ENCODE measurements at regions of chr1 and their contacts with region 1.

Region 1: GRCh38 chr1:66929999-66930822 is 5.4 kb downstream of the MIER1 start:
- DNase-seq: peak; percentile 94
- H3K4me3 Mint-ChIP-seq: peak overlapping the region; percentile 84
- H3K27ac Mint-ChIP-seq: peak overlapping the region; percentile 99
- H3K4me1 Mint-ChIP-seq: peaks cover 29% of the 10 kb centered on the region
- H3K27me3 Mint-ChIP-seq: no peaks in the 10 kb centered on the region
- CTCF ChIP-seq: no peak

Region 2: GRCh38 chr1:66563094-66563800 is 367.0 kb before region 1 on chr1:
- CTCF ChIA-PET with region 1: no interaction called
- POLR2A ChIA-PET with region 1: no interaction called
- intact Hi-C with region 1: loop called (anchors 5 kb)
- DNase-seq: peak; percentile 70
- H3K4me3 Mint-ChIP-seq: no peak overlapping the region
- H3K27ac Mint-ChIP-seq: peak overlapping the region; percentile 95
- H3K4me1 Mint-ChIP-seq: peaks cover 34% of the 10 kb centered on the region
- H3K27me3 Mint-ChIP-seq: no peaks in the 10 kb centered on the region
- CTCF ChIP-seq: no peak

Region 3: DNA sequence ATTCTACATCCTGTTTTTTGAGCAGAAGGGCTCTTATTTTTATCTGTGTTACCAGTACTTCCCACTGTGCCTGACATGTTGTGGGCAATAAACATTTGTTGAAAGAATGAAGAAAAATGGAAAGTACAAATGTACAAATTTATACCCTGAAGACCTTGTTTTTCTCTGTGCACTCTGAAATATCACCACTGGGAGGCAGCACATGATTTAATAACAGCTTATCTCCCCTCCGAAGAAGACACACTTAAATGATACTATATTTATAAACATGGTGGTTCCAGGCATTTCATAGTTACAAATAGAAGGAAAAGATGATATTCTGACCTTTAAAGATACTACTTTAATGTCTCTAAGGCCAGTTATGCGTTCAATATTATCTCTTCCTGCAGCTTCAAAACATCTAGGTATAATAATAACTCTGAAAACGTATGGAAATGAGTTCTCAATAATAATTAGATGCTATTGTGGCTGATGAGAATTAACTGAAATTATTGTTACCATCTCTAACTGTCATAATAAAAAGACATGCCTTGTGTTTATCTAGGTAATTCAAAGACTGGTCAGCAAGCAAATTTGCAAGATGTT is 165.1 kb before region 1 on chr1:
- CTCF ChIA-PET with region 1: interaction called, 4 read pairs
- POLR2A ChIA-PET with region 1: interaction called, 7 read pairs
- intact Hi-C with region 1: loop called (anchors 1 kb)
- DNase-seq: peak; percentile 65
- H3K4me3 Mint-ChIP-seq: no peak overlapping the region
- H3K27ac Mint-ChIP-seq: no peak overlapping the region
- H3K4me1 Mint-ChIP-seq: no peaks in the 10 kb centered on the region
- H3K27me3 Mint-ChIP-seq: no peaks in the 10 kb centered on the region
- CTCF ChIP-seq: peak; percentile 78

Region 4: DNA sequence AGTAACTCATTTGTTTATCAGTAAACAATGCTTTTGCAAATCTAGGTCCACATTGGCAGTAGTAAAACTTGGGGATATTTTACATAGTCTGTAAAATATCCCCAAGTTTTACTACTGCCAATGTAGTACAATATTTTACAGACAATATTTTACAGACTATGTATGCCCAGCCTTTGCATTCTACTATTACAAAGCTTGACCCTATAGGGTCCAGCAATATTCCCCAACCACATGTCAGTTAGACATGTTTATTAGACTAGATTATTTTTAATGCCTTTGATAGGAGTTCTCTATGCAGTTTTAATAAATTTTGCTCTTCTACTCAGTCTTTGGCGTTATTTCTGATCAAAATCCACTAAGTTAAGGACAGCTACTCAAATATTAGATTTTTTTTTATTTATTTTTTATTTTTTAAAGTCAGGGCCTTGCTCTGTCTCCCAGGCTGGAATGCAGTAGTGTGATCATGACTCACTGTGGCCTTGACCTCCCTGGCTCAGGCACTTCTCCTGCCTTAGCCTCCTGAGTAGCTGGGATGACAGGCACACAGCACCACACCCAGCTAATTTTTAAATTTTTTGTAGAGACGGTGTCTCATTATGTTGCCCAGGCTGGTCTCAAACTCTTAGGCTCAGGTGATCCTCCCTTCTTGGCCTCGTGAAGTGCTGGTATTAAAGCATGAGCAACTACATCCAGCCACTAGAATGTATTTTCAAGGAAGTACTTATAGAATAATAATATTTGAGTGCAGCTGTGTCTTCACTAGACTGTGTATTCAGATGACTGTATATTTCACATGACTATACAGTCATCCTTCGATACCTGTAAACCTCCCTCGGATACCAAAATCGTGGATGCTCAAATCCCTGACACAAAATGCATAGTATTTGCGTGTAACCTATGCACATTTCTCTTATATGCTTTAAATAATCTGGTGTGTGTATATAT is 14.4 kb after region 1 on chr1:
- CTCF ChIA-PET with region 1: interaction called, 6 read pairs
- POLR2A ChIA-PET with region 1: interaction called, 63 read pairs
- intact Hi-C with region 1: no loop called
- DNase-seq: peak; percentile 80
- H3K4me3 Mint-ChIP-seq: no peak overlapping the region
- H3K27ac Mint-ChIP-seq: peak overlapping the region; percentile 93
- H3K4me1 Mint-ChIP-seq: peaks cover 32% of the 10 kb centered on the region
- H3K27me3 Mint-ChIP-seq: no peaks in the 10 kb centered on the region
- CTCF ChIP-seq: no peak